MCF 10A (cell line): ENCODE measurements at regions of chr1 and their contacts with region 1.

Region 1: DNA sequence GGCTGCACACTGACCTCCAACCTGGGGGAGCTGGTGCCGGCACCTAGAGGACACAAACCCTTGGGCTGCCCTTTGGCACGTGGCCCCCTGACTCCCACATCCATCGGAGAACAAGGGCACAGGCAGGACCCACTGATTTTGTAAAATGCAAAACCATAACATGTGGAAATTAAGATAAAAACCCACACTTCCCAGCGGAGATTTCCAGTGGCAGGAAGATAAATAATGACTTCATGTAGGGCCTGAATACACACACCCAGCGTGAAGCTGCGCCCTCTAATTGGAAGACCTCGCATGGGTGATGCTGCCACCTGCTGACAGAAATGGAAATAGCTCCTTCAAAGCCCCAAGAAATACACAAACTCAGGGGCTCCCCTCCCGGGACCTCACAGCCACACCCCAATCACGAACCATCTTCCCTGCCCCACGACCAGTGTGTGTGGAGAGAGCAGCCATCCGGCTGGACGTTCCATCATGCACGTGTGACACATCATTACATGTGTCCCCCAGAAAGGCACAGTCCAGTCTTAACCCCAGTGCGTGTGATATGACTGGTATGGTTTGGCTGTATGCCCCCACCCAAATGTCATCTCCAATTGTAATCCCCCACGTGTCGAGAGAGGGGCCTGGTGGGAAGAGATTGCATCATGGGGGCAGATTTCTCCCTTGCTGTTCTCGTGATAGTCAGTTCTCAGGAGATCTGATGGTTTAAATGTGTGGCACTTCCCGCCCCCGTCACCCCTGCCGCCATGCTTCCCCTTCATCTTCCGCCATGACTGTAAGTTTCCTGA is 5.7 kb upstream of the TPRG1L start:
- DNase-seq: peak; percentile 79
- H3K4me3 Mint-ChIP-seq: no peak overlapping the region
- H3K27ac Mint-ChIP-seq: no peak overlapping the region
- H3K4me1 Mint-ChIP-seq: peaks cover 24% of the 10 kb centered on the region
- H3K27me3 Mint-ChIP-seq: no peaks in the 10 kb centered on the region
- CTCF ChIP-seq: peak; percentile 85

Region 2: GRCh38 chr1:3453203-3453761 is 165.8 kb before region 1 on chr1:
- CTCF ChIA-PET with region 1: interaction called, 5 read pairs
- POLR2A ChIA-PET with region 1: interaction called, 10 read pairs
- intact Hi-C with region 1: loop called (anchors 1 kb)
- DNase-seq: peak; percentile 78
- H3K4me3 Mint-ChIP-seq: peak overlapping the region; percentile 76
- H3K27ac Mint-ChIP-seq: no peak overlapping the region
- H3K4me1 Mint-ChIP-seq: no peaks in the 10 kb centered on the region
- H3K27me3 Mint-ChIP-seq: peaks cover 19% of the 10 kb centered on the region
- CTCF ChIP-seq: peak; percentile 97

Region 3: DNA sequence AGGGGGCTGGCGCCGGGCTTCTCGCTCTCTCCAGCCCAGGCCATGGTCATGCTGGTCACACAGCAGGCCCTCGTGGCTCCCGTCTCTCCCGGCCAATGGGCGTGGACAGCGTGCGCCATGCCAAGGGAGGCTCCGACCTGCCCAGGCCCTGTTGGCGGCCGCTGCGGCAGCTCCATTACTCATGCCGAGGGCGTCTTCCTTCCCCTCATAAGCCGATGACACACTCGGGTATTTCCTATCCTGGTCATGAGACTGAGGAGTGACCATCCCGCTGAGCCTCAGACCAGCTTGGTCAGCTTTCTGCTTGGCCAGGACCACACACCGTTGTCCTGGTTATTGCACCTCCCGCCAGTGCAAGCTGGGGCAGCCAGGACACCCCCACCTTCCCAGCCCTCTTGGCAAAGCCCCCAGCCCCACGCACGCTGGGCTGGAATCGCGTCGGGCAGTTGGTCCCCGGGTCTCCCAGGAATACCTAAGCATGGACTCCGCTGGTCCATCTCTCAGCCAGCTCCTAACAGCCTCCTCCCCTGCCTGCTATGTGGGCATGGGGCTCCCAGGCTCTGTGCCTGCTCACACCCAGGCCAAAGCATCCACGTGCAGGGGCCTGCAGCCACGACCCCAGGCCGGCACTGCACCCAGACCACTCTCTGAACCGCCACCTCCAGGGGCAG is 114.8 kb before region 1 on chr1:
- CTCF ChIA-PET with region 1: interaction called, 12 read pairs
- POLR2A ChIA-PET with region 1: interaction called, 5 read pairs
- intact Hi-C with region 1: no loop called
- DNase-seq: peak; percentile 91
- H3K4me3 Mint-ChIP-seq: no peak overlapping the region
- H3K27ac Mint-ChIP-seq: peak overlapping the region; percentile 32
- H3K4me1 Mint-ChIP-seq: peaks cover 13% of the 10 kb centered on the region
- H3K27me3 Mint-ChIP-seq: no peaks in the 10 kb centered on the region
- CTCF ChIP-seq: no peak

Region 4: GRCh38 chr1:3530926-3531818 is 87.9 kb before region 1 on chr1:
- CTCF ChIA-PET with region 1: interaction called, 37 read pairs
- POLR2A ChIA-PET with region 1: interaction called, 4 read pairs
- intact Hi-C with region 1: no loop called
- DNase-seq: peak; percentile 87
- H3K4me3 Mint-ChIP-seq: peak overlapping the region; percentile 74
- H3K27ac Mint-ChIP-seq: peak overlapping the region; percentile 47
- H3K4me1 Mint-ChIP-seq: peaks cover 12% of the 10 kb centered on the region
- H3K27me3 Mint-ChIP-seq: no peaks in the 10 kb centered on the region
- CTCF ChIP-seq: no peak

Region 5: GRCh38 chr1:3564921-3565827 is 53.9 kb before region 1 on chr1:
- CTCF ChIA-PET with region 1: interaction called, 57 read pairs
- POLR2A ChIA-PET with region 1: interaction called, 4 read pairs
- intact Hi-C with region 1: loop called (anchors 1 kb)
- DNase-seq: peak; percentile 38
- H3K4me3 Mint-ChIP-seq: no peak overlapping the region
- H3K27ac Mint-ChIP-seq: no peak overlapping the region
- H3K4me1 Mint-ChIP-seq: peaks cover 7% of the 10 kb centered on the region
- H3K27me3 Mint-ChIP-seq: peaks cover 11% of the 10 kb centered on the region
- CTCF ChIP-seq: peak; percentile 97

Region 6: DNA sequence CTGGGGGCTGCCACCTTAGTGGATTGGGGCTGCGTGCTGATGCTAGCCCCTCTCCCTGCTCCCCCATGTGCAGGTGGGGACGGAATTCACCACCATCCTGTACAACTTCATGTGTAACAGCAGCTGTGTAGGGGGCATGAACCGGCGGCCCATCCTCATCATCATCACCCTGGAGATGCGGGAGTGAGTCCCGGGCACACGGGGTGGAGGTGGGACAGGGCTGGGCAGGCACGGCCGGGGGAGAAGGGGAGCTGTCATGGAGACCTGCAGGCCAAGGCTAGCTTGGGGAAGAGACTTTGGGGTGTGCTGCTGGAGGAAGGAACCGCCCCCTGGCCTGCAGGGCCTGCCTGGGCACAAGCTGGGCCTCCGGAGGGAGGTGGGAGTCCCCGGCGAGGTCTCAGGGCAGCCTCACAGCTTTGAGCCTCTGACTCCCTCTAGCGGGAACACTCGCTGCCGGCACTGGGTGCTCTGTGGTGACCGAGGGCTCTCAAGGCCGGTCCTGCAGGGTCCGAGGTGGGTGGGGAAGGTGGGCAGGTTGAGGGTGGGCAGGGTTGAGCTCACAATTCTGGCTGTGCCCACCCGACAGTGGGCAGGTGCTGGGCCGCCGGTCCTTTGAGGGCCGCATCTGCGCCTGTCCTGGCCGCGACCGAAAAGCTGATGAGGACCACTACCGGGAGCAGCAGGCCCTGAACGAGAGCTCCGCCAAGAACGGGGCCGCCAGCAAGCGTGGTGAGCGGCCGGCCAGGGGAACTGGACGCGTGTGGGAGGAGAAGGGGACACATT is 108.2 kb after region 1 on chr1:
- CTCF ChIA-PET with region 1: interaction called, 12 read pairs
- POLR2A ChIA-PET with region 1: interaction called, 4 read pairs
- intact Hi-C with region 1: loop called (anchors 1 kb)
- DNase-seq: no peak
- H3K4me3 Mint-ChIP-seq: no peak overlapping the region
- H3K27ac Mint-ChIP-seq: no peak overlapping the region
- H3K4me1 Mint-ChIP-seq: no peaks in the 10 kb centered on the region
- H3K27me3 Mint-ChIP-seq: no peaks in the 10 kb centered on the region
- CTCF ChIP-seq: no peak

Region 7: GRCh38 chr1:3827813-3828307 is 208.8 kb after region 1 on chr1:
- CTCF ChIA-PET with region 1: no interaction called
- POLR2A ChIA-PET with region 1: no interaction called
- intact Hi-C with region 1: no loop called
- DNase-seq: no peak
- H3K4me3 Mint-ChIP-seq: no peak overlapping the region
- H3K27ac Mint-ChIP-seq: no peak overlapping the region
- H3K4me1 Mint-ChIP-seq: no peaks in the 10 kb centered on the region
- H3K27me3 Mint-ChIP-seq: no peaks in the 10 kb centered on the region
- CTCF ChIP-seq: no peak